ENCODE measurements at regions of chr2 and their contacts with region 1.

Region 1: GRCh38 chr2:112433932-112434730 is 686 bp upstream of the RGPD8 start:
- DNase-seq: no peak
- H3K4me3 Mint-ChIP-seq: peak overlapping the region; percentile 5
- H3K27ac Mint-ChIP-seq: no peak overlapping the region
- H3K4me1 Mint-ChIP-seq: peaks cover 18% of the 10 kb centered on the region
- H3K27me3 Mint-ChIP-seq: peaks cover 2% of the 10 kb centered on the region

Region 2: DNA sequence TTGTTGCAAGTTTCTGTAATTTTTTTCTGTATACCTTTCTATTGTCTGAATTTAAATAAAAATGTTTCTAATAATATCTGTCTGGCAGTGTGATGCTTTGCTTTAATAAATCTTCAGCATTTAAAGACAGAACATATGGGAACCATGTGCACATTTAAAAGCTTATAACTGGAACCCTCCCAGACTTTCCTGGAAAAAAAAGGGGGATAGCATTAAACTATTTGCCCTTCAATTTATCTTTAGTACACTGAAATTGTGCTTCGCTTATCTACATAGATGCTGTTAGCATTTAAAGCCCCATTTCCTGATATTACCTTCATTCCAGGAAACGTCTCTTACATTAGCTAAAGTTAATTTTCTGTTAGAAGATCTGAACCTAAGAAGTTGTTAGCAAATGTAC is 94.1 kb before region 1 on chr2:
- intact Hi-C with region 1: loop called (anchors 10 kb)
- DNase-seq: no peak
- H3K4me3 Mint-ChIP-seq: no peak overlapping the region
- H3K27ac Mint-ChIP-seq: no peak overlapping the region
- H3K4me1 Mint-ChIP-seq: peaks cover 14% of the 10 kb centered on the region
- H3K27me3 Mint-ChIP-seq: no peaks in the 10 kb centered on the region